ENCODE measurements at regions of chr17 and their contacts with region 1.

Region 1: GRCh38 chr17:30344283-30345088 is 10.6 kb upstream of the TMIGD1 start:
- DNase-seq: no peak
- H3K4me3 Mint-ChIP-seq: no peak overlapping the region
- H3K27ac Mint-ChIP-seq: no peak overlapping the region
- H3K4me1 Mint-ChIP-seq: peaks cover 21% of the 10 kb centered on the region
- H3K27me3 Mint-ChIP-seq: no peaks in the 10 kb centered on the region

Region 2: GRCh38 chr17:30323895-30324319 is 20.6 kb before region 1 on chr17:
- CTCF ChIA-PET with region 1: interaction called, 10 read pairs
- intact Hi-C with region 1: no loop called
- DNase-seq: peak; percentile 84
- H3K4me3 Mint-ChIP-seq: no peak overlapping the region
- H3K27ac Mint-ChIP-seq: peak overlapping the region; percentile 74
- H3K4me1 Mint-ChIP-seq: peaks cover 25% of the 10 kb centered on the region
- H3K27me3 Mint-ChIP-seq: no peaks in the 10 kb centered on the region

Region 3: GRCh38 chr17:30378824-30379302 is 34.4 kb after region 1 on chr17 and contains the start of gene CPD:
- CTCF ChIA-PET with region 1: interaction called, 8 read pairs
- intact Hi-C with region 1: loop called (anchors 1 kb)
- DNase-seq: peak; percentile 98
- H3K4me3 Mint-ChIP-seq: peak within 1 kb of the TSS; percentile 86
- H3K27ac Mint-ChIP-seq: peak within 1 kb of the TSS; percentile 92
- H3K4me1 Mint-ChIP-seq: peaks cover 64% of the 10 kb centered on the region
- H3K27me3 Mint-ChIP-seq: no peaks in the 10 kb centered on the region
- total RNA-seq, gene CPD: 37.9 to 43.8 TPM

Region 4: DNA sequence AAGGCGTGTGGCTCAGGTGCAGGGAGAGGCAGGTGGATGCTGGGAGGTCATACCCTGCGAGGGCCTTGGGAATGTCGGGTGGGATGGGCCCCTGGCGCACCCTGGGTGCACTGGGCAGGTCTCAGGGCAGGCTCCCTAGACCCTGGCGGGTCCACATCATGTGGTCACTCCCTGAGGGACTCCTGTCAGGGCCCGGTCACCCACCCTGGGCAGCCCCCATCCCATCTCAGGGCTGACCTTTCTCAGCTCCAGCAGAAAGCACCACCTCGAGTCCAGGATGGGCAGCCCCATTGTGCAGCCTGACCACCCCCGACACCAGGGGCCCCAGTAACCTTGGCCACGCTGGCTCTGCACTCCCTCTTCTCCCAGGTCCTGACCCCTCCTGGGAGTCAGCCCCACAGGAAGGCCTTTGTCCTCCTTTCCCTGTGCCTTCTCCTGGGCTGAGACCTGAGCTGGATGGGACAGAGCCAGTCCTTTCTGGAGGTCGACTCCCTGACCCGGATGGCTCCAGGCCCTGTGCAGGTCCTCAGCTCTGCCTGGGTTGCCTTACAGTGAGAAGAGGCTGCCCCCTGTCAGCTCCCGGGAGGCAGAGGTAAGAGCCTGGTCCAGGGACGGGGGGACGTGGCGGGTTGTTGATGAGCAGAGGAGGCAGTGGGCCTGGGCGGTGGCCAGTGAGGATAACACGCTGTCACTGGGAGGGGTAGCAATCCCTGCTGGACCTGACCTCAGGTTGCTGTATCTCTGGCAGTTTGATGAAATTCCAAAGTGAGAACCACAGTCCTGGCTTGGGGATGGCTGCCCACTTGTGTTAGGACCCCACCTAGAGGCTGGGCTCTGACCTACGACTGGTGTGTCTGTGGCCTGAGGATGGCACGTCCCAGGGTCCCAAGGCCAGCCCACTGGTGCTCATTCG is 210.6 kb after region 1 on chr17:
- CTCF ChIA-PET with region 1: interaction called, 3 read pairs
- intact Hi-C with region 1: loop called (anchors 2 kb)
- DNase-seq: peak; percentile 32
- H3K4me3 Mint-ChIP-seq: no peak overlapping the region
- H3K27ac Mint-ChIP-seq: no peak overlapping the region
- H3K4me1 Mint-ChIP-seq: peaks cover 8% of the 10 kb centered on the region
- H3K27me3 Mint-ChIP-seq: no peaks in the 10 kb centered on the region

Region 5: DNA sequence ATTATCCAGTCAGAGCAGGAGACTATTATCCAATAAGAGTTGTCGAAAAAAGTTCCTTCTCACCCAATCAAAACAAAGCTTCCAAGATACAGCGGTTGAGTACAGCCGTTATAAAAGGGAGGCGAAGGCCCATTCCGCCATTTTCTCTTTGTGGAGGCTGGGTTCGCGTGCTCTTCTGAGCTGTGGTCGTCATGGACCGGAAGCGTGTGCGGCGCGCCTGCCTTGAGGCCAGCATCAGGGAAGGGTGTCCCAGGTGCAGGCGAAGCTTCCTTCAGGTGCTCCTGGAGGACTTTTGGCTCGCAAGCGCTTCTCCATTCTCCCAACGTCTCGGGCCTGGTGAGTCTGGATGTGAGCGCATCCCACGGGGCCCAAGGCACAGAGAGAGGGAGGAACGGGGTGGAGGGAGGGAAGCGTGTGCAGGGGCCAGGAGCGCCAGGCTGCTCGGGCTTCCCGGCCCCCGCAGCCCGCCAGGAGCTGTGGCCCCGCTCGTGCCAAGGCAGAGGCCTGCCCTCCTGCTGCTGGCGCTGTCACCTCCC is 231.9 kb after region 1 on chr17:
- CTCF ChIA-PET with region 1: no interaction called
- intact Hi-C with region 1: no loop called
- DNase-seq: no peak
- H3K4me3 Mint-ChIP-seq: no peak overlapping the region
- H3K27ac Mint-ChIP-seq: no peak overlapping the region
- H3K4me1 Mint-ChIP-seq: no peaks in the 10 kb centered on the region
- H3K27me3 Mint-ChIP-seq: no peaks in the 10 kb centered on the region

Region 6: GRCh38 chr17:30824356-30825145 is 480.1 kb after region 1 on chr17 and contains the start of gene CRLF3:
- CTCF ChIA-PET with region 1: no interaction called
- intact Hi-C with region 1: loop called (anchors 1 kb)
- DNase-seq: peak; percentile 91
- H3K4me3 Mint-ChIP-seq: peak within 1 kb of the TSS; percentile 85
- H3K27ac Mint-ChIP-seq: peak within 1 kb of the TSS; percentile 94
- H3K4me1 Mint-ChIP-seq: peaks cover 39% of the 10 kb centered on the region
- H3K27me3 Mint-ChIP-seq: no peaks in the 10 kb centered on the region
- total RNA-seq, gene CRLF3: 47.1 to 47.7 TPM